Mucosa of descending colon (tissue), 3 donors: ENCODE measurements at regions of chr14 and their contacts with region 1.

Region 1: DNA sequence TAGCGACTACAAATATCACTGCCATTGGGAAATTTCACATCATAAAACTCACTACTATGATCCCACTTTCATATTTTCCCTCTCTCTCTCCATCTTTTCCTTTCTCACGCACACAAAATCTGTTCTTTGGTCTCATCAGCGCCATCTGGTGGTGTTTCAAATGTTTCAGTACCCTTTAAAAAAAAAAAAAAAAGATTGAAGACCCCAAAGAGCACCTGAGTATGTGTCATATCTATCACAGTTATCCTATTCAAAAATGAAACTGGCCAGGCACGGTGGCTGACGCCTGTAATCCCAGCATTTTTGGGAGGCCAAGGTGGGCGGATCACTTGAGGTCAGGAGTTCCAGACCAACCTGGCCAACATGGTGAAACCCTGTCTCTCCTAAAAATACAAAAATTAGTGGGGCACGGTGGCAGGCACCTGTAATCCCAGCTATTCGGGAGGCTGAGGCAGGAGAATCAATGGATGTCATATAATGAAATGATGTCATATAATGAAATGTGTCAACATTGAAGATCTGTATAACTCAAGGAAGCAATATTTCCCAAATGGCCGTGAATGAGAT is 72.4 kb downstream of the TTC9 start:
- DNase-seq: peak in 1 of 3 donors; percentile 78
- ATAC-seq: no peak
- H3K4me3 ChIP-seq: no peak overlapping the region
- H3K4me1 ChIP-seq: no peaks in the 10 kb centered on the region
- CTCF ChIP-seq: peak; percentile 28

Region 2: DNA sequence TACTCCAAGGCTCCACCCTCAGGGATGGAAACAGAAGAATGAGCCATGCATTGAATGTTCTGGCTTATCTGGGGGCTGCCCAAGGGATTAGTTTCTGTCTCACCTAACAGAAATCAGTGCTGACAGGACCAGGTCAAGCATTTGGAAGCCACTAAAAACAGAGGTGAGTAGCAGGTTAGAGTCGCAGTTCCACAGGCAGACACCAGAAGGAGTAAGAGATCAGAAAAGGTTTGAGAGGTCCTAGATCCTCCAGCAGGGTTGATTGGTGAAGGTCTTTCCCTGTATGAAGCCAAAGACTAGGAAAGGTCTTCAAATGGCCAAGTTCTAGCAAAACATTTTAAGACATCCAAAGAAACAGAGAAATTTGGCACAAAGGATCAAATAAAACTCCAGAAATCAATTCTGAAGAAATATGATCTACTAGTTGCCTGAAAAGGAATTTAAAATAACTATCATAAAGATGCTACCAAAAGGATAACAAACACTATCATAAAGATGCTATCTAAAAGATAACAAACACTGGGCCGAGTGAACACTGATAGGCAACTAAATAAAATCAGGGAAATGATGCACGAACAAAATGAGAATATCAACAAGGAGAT is 91.9 kb before region 1 on chr14:
- intact Hi-C with region 1: loop called in 1 of 2 experiments (anchors 5 kb)
- DNase-seq: peak in 1 of 3 donors; percentile 73
- ATAC-seq: peak; percentile 58
- H3K4me3 ChIP-seq: no peak overlapping the region
- H3K4me1 ChIP-seq: no peaks in the 10 kb centered on the region
- CTCF ChIP-seq: no peak